ENCODE measurements at regions of chr13 and their contacts with region 1.

Region 1: GRCh38 chr13:76894401-76895110 is 8.4 kb upstream of the KCTD12 start:
- DNase-seq: peak in 1 of 3 donors; percentile 29
- H3K4me3 ChIP-seq: no peak overlapping the region
- H3K4me3 Mint-ChIP-seq: no peak overlapping the region
- H3K27ac ChIP-seq: no peak overlapping the region
- H3K27ac Mint-ChIP-seq: peak overlapping the region in 1 of 7 donors; percentile 41
- H3K4me1 ChIP-seq: peaks cover 9 to 10% of the 10 kb centered on the region in 2 donors
- H3K4me1 Mint-ChIP-seq: peaks cover 13% of the 10 kb centered on the region
- H3K27me3 ChIP-seq: peaks cover 3 to 7% of the 10 kb centered on the region in 2 donors
- H3K27me3 Mint-ChIP-seq: peaks cover 5 to 13% (median 8%) of the 10 kb centered on the region in 3 donors
- CTCF ChIP-seq: no peak

Region 2: GRCh38 chr13:76637641-76638141 is 256.9 kb before region 1 on chr13:
- intact Hi-C with region 1: no loop called
- DNase-seq: no peak
- H3K4me3 ChIP-seq: no peak overlapping the region
- H3K4me3 Mint-ChIP-seq: no peak overlapping the region
- H3K27ac ChIP-seq: no peak overlapping the region
- H3K27ac Mint-ChIP-seq: no peak overlapping the region
- H3K4me1 ChIP-seq: no peaks in the 10 kb centered on the region
- H3K4me1 Mint-ChIP-seq: no peaks in the 10 kb centered on the region
- H3K27me3 ChIP-seq: no peaks in the 10 kb centered on the region
- H3K27me3 Mint-ChIP-seq: peaks cover 0 to 3% (median 1%) of the 10 kb centered on the region in 3 donors
- CTCF ChIP-seq: no peak

Region 3: DNA sequence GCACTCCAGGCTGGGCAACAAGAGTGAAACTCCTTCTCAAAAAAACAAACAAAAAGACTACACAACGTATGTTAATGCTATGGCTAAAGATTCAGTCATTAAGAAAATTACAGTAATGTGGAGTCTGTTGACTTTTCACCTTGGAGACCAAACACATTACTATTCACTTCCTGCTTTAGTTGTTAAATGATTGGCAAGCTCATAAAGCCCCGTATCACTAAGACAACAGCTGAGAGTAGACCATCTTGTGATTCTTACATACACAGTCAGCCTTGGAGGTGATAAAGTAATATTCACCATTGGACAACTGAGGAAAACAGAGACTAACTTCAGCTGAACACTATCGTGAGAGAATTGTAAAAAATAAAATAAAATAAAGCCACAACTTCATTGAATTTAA is 94.9 kb before region 1 on chr13:
- intact Hi-C with region 1: loop called (anchors 5 to 10 kb)
- DNase-seq: peak; percentile 66 to 81 (median 71)
- H3K4me3 ChIP-seq: no peak overlapping the region
- H3K4me3 Mint-ChIP-seq: no peak overlapping the region
- H3K27ac ChIP-seq: peak overlapping the region; percentile 42 to 60
- H3K27ac Mint-ChIP-seq: peak overlapping the region; percentile 82 to 95 (median 91)
- H3K4me1 ChIP-seq: peaks cover 49 to 52% of the 10 kb centered on the region in 2 donors
- H3K4me1 Mint-ChIP-seq: peaks cover 46% of the 10 kb centered on the region
- H3K27me3 ChIP-seq: no peaks in the 10 kb centered on the region
- H3K27me3 Mint-ChIP-seq: no peaks in the 10 kb centered on the region
- CTCF ChIP-seq: no peak

Region 4: DNA sequence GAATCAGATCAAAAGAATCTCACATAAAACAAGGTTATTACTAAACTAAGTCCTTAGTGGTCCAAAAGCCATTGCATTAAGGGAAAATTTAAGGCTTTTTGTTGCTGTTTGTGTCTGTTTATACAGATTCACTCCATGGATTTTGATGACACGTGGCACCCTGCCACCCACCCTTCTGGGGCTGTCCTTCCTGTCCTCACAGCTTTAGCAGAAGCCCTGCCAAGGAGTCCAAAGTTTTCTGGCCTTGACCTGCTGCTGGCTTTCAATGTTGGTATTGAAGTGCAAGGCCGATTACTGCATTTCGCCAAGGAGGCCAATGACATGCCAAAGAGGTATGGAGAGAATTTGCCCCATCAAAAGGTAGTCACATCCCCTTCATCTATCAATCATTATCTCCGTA is 60.6 kb after region 1 on chr13:
- intact Hi-C with region 1: no loop called
- DNase-seq: no peak
- H3K4me3 ChIP-seq: no peak overlapping the region
- H3K4me3 Mint-ChIP-seq: no peak overlapping the region
- H3K27ac ChIP-seq: no peak overlapping the region
- H3K27ac Mint-ChIP-seq: no peak overlapping the region
- H3K4me1 ChIP-seq: peaks cover under 1 to 8% of the 10 kb centered on the region in 2 donors
- H3K4me1 Mint-ChIP-seq: peaks cover 9% of the 10 kb centered on the region
- H3K27me3 ChIP-seq: no peaks in the 10 kb centered on the region
- H3K27me3 Mint-ChIP-seq: peaks cover 2 to 10% (median 6%) of the 10 kb centered on the region in 3 donors
- CTCF ChIP-seq: no peak